Gastrocnemius medialis (tissue), 4 donors: ENCODE measurements at regions of chr1 and their contacts with region 1.

Region 1: GRCh38 chr1:210311726-210312493 is 16.8 kb upstream of the HHAT start:
- DNase-seq: no peak
- ATAC-seq: peak; percentile 31 to 45
- H3K4me3 ChIP-seq: peak overlapping the region in 3 of 4 donors; percentile 34 to 49 (median 47)
- H3K27ac ChIP-seq: peak overlapping the region; percentile 19 to 65 (median 58)
- H3K4me1 ChIP-seq: no peaks in the 10 kb centered on the region
- H3K27me3 ChIP-seq: no peaks in the 10 kb centered on the region
- CTCF ChIP-seq: no peak
- POLR2A ChIP-seq: no peak

Region 2: GRCh38 chr1:209860293-209860881 is 451.5 kb before region 1 on chr1:
- in situ Hi-C with region 1: loop called (anchors 25 kb)
- intact Hi-C with region 1: loop called (anchors 2 kb)
- DNase-seq: peak; percentile 19 to 45
- ATAC-seq: peak in 1 of 2 donors; percentile 60
- H3K4me3 ChIP-seq: no peak overlapping the region
- H3K27ac ChIP-seq: no peak overlapping the region
- H3K4me1 ChIP-seq: no peaks in the 10 kb centered on the region
- H3K27me3 ChIP-seq: peaks cover 0 to 4% (median 0%) of the 10 kb centered on the region in 3 donors
- CTCF ChIP-seq: peak; percentile 46 to 84 (median 52)
- POLR2A ChIP-seq: no peak

Region 3: GRCh38 chr1:210143465-210144062 is 168.3 kb before region 1 on chr1:
- in situ Hi-C with region 1: loop called (anchors 5 to 10 kb)
- intact Hi-C with region 1: loop called (anchors 1 kb)
- DNase-seq: peak; percentile 23 to 45
- ATAC-seq: no peak
- H3K4me3 ChIP-seq: no peak overlapping the region
- H3K27ac ChIP-seq: no peak overlapping the region
- H3K4me1 ChIP-seq: no peaks in the 10 kb centered on the region
- H3K27me3 ChIP-seq: peaks cover 0 to 3% (median 0%) of the 10 kb centered on the region in 3 donors
- CTCF ChIP-seq: peak; percentile 42 to 64 (median 51)
- POLR2A ChIP-seq: no peak

Region 4: GRCh38 chr1:210239349-210240111 is 72.4 kb before region 1 on chr1:
- in situ Hi-C with region 1: no loop called
- intact Hi-C with region 1: loop called (anchors 5 kb)
- DNase-seq: no peak
- ATAC-seq: no peak
- H3K4me3 ChIP-seq: no peak overlapping the region
- H3K27ac ChIP-seq: no peak overlapping the region
- H3K4me1 ChIP-seq: no peaks in the 10 kb centered on the region
- H3K27me3 ChIP-seq: peaks cover 0 to 9% (median 7%) of the 10 kb centered on the region in 3 donors
- CTCF ChIP-seq: peak in 3 of 5 experiments; percentile 12 to 27 (median 16)
- POLR2A ChIP-seq: no peak

Region 5: DNA sequence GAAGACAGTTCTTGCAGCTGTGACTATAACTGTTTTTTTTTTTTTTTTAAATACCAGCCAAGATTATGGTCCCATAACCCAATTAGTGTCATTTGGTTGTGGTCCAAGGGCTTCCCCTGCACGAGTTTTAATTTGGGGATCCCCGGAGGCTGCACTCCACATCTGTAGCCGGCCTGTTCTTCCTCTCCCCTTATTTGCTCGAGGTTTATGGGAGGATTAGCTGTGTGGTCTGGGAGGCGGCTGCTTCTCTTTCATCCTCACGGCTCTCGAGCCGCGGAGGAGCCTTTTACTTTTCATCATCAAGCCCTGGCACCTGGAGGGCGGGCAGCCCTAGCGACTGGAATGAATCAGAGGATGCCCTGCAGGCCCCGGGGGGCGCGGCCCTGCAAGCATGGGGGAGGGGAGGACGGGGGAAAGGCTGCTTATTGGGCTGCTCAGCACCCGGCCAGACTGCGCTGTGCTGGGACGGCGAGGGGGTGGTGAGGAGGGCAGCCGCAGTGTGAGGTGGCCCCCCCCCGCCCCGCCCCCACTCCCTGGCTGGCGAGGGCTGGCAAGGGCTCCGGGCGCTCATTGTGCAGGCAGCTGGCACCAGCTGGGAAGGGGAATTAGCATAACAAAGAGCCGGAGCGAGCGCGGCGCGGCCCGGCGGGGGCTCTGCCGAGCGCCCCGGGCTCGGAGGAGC is 60.8 kb before region 1 on chr1:
- in situ Hi-C with region 1: no loop called
- intact Hi-C with region 1: no loop called
- DNase-seq: no peak
- ATAC-seq: peak in 1 of 2 donors; percentile 14
- H3K4me3 ChIP-seq: peak overlapping the region; percentile 43 to 59 (median 52)
- H3K27ac ChIP-seq: no peak overlapping the region
- H3K4me1 ChIP-seq: peaks cover 6 to 12% of the 10 kb centered on the region in 2 donors
- H3K27me3 ChIP-seq: peaks cover 0 to 17% (median 0%) of the 10 kb centered on the region in 3 donors
- CTCF ChIP-seq: no peak
- POLR2A ChIP-seq: no peak

Region 6: GRCh38 chr1:210292231-210292871 is 19.6 kb before region 1 on chr1:
- in situ Hi-C with region 1: no loop called
- intact Hi-C with region 1: loop called (anchors 1 kb)
- DNase-seq: peak; percentile 38 to 61
- ATAC-seq: peak; percentile 78 to 85
- H3K4me3 ChIP-seq: peak overlapping the region; percentile 52 to 72 (median 61)
- H3K27ac ChIP-seq: peak overlapping the region; percentile 40 to 76 (median 57)
- H3K4me1 ChIP-seq: peaks cover 12 to 28% of the 10 kb centered on the region in 2 donors
- H3K27me3 ChIP-seq: no peaks in the 10 kb centered on the region
- CTCF ChIP-seq: peak in 4 of 5 experiments; percentile 27 to 58 (median 45)
- POLR2A ChIP-seq: no peak